ENCODE measurements at regions of chr6 and their contacts with region 1.

Region 1: DNA sequence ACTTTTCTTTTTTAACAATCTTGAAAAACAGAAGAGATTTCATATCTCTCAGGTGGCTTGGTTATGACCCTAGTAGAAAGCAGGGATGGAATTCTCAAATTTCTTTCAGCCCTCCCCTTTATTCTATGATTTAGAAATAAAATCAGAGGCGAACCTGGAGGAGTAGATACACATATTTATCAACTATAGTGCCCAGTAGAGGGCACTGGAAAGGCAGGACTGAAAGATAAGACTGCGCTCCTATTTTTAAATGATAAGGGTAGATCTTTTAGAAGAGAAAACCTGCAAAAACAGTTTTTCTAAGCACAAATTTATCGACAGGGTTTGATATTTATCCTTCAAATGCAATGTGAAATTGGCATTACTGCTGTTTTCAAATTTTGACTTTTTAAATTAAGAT is 1296.6 kb downstream of the EPHA7 start:
- DNase-seq: no peak
- ATAC-seq: no peak
- H3K4me3 ChIP-seq: no peak overlapping the region
- H3K27ac ChIP-seq: no peak overlapping the region
- H3K4me1 ChIP-seq: peaks cover 0 to 5% (median 0%) of the 10 kb centered on the region in 12 donors
- H3K27me3 ChIP-seq: no peaks in the 10 kb centered on the region
- CTCF ChIP-seq: peak in 9 of 12 donors; percentile 11 to 50 (median 30)
- POLR2A ChIP-seq: no peak

Region 2: DNA sequence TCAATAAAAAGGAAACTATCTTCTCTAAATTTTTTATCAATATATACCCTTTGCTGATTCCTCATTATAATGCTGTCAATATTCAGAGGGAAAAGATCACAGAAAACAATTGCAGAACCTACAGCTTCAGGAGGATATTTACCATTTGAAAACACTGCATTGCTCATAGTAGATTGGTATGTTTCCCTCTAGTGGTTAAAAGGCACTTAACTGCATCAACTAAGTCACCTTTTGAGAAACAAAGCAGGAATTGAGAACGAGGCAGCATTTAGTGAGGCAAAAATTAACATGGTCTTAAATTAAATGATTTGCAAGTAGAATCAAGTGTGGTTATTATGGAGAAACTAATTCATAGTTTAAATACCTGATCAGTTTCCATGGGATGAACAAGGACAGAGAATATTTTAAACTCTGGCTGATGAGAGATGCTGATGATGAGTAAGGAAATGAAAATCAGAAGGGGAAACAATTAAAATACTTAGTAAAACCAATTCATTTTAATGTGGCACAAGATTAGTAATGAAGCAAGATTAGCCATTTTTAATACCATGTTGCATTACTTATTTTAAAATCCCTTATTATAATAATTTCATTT is 654.5 kb after region 1 on chr6:
- intact Hi-C with region 1: loop called in 2 of 10 experiments (anchors 10 kb)
- DNase-seq: no peak
- ATAC-seq: no peak
- H3K4me3 ChIP-seq: no peak overlapping the region
- H3K27ac ChIP-seq: no peak overlapping the region
- H3K4me1 ChIP-seq: peaks cover 0 to 6% (median 0%) of the 10 kb centered on the region in 12 donors
- H3K27me3 ChIP-seq: no peaks in the 10 kb centered on the region
- CTCF ChIP-seq: peak; percentile 28 to 66 (median 47)
- POLR2A ChIP-seq: no peak